Sigmoid colon (tissue), 7 donors: ENCODE measurements at regions of chr6 and their contacts with region 1.

Region 1: DNA sequence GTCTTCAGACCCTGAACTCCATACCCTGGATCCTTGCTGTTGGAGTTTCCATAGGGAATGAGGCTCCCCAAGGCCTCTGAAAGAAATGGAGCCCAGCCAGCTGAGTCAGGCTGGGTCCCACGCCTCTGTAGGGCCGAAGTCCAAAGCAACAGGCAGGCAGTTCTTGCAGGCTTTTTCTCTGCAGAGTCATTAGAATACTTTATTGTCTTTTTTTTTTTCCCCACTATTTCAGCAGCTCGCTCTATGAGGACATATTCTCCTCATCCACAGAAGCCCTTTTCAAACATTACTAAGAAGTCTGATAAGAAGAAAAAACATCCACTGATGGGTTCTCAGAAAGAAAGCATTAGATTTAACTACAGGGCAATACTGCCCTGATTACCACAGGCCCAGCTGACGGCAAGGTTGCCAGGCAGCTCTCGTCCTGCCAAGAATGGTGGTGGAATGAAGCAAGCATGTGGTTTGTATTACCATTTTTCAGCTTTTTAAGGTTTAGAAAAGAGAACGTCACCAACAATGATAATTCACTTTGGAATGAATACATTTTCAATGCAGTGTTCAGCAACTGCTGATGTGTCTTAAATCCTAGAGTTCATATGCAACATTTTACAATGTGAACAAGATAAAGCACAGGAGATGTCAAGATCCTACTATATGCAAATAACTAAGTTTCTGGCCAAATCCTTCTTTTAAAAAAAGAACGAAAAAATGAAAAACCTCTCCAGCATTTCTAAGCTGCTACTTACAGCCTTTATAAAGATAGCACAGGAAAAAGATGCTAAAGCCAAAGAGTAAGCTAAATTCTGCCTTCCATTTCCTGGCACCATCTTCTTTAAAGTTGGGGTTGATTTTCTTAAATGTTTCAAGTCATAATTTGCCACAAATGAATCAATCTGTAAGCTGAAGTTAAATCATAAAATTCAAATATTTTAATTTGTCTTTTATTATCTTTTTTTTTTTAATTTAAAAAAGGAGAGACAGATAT is 223.6 kb upstream of the CITED2 start:
- DNase-seq: peak; percentile 86
- H3K4me3 ChIP-seq: no peak overlapping the region
- H3K27ac ChIP-seq: peak overlapping the region; percentile 69 to 82 (median 77)
- H3K4me1 ChIP-seq: peaks cover 0 to 54% (median 46%) of the 10 kb centered on the region in 4 donors
- H3K27me3 ChIP-seq: no peaks in the 10 kb centered on the region
- CTCF ChIP-seq: no peak
- EP300 ChIP-seq: peak in 1 of 4 donors; percentile 11
- POLR2A ChIP-seq: no peak

Region 2: DNA sequence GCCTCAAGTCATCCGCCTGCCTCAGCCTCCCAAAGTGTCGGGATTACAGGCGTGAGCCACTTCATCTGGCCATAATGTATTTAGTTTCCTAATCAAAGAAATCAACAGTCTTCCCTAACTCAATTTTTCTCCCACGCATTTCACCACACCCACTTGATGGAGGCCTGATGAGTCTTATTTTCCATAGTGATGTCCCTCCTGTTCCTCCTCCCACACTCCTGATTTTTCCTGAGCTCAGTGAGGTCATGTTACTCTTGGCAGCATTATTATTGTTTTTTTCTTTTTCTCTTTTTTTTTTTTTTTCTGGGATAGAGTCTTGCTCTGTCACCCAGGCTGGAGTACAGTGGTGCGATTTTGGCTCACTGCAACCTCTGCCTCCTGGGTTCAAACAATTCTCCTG is 560.6 kb before region 1 on chr6:
- intact Hi-C with region 1: no loop called
- DNase-seq: no peak
- H3K4me3 ChIP-seq: no peak overlapping the region
- H3K27ac ChIP-seq: no peak overlapping the region
- H3K4me1 ChIP-seq: no peaks in the 10 kb centered on the region
- H3K27me3 ChIP-seq: no peaks in the 10 kb centered on the region
- CTCF ChIP-seq: no peak
- EP300 ChIP-seq: no peak
- POLR2A ChIP-seq: no peak

Region 3: DNA sequence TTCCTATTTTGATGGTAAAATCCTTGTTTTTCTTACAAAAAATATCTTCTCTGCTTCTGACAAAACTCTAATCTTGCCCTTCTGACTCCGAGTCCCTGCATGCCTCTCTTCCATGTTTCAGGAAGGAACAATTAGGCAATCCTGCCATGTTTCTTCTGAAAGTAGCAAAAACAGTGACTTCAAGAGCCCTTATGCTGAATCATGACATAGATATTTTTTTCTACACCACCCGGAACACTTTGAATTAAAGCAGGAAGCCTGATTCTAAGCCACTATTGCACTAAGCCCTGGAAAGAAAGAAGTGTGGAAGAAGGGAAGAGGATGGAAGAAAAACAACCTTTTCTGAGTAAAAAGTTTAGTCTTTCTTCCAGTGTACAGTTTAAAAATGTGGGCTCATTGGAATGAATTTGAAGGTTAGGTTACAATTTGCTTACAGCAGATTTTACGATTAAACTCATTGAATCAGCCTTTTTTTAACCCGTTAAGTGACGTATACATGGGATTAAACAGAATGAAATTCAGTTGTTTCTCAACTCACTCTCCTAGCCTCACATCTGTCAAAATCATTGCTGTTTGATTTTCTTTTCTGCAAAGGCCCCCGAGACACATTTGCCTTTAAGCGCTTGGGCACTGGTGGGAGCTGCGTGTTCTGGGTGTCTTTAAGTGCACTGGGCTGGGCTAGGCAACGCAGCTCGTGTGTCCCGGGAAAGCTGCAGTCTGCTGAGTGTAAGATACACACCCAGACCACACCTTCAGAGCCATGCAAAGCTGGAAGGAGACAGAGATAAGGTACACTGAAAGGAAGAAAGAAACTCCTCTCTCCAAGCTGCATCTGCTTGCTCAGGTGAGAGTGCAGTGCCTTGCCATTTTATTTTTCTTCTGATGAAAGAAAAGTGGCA is 64.2 kb before region 1 on chr6:
- intact Hi-C with region 1: no loop called
- DNase-seq: no peak
- H3K4me3 ChIP-seq: no peak overlapping the region
- H3K27ac ChIP-seq: peak overlapping the region; percentile 40 to 68 (median 52)
- H3K4me1 ChIP-seq: peaks cover 0 to 38% (median 30%) of the 10 kb centered on the region in 4 donors
- H3K27me3 ChIP-seq: no peaks in the 10 kb centered on the region
- CTCF ChIP-seq: no peak
- EP300 ChIP-seq: no peak
- POLR2A ChIP-seq: peak in 1 of 2 donors; percentile 15

Region 4: DNA sequence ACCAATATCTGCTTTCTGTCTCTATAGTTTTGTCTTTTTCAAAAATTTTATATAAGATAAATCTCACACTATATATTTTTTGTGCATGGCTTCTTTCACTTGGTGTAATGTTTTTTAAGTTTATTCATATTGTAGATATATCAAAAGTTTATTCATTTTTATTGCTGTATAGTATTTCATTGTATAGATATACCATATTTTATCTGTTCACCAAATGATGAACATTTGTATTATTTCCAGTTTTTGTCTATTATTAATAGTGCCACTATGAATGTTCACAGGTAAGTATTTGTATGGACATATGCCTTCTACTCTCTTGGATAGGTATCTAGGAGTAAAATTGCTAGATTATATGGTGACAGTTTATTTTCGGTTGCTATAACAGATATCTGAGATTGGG is 65.9 kb after region 1 on chr6:
- intact Hi-C with region 1: no loop called
- DNase-seq: no peak
- H3K4me3 ChIP-seq: no peak overlapping the region
- H3K27ac ChIP-seq: no peak overlapping the region
- H3K4me1 ChIP-seq: no peaks in the 10 kb centered on the region
- H3K27me3 ChIP-seq: no peaks in the 10 kb centered on the region
- CTCF ChIP-seq: no peak
- EP300 ChIP-seq: no peak
- POLR2A ChIP-seq: no peak

Region 5: DNA sequence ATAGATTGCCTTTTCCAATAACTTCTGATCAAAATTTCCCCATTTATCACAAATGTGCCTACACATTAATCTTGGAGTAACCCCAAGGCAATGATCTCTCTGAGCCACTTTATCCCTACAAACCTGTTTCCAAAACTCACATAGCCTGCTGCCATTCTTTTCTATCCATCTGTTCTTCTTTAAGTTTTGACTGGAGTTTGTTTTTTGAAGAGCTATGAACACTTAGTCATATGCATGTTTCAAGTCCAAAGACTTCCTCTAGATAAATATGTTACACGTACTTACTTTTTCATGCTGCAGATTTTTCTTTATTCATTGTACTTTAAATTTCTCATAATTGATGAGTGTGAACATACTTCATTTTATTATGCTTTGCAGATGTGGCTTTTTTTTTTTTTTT is 265.3 kb after region 1 on chr6:
- intact Hi-C with region 1: loop called (anchors 10 kb)
- DNase-seq: no peak
- H3K4me3 ChIP-seq: no peak overlapping the region
- H3K27ac ChIP-seq: no peak overlapping the region
- H3K4me1 ChIP-seq: peaks cover 0 to 25% (median 17%) of the 10 kb centered on the region in 4 donors
- H3K27me3 ChIP-seq: no peaks in the 10 kb centered on the region
- CTCF ChIP-seq: no peak
- EP300 ChIP-seq: no peak
- POLR2A ChIP-seq: no peak

Region 6: DNA sequence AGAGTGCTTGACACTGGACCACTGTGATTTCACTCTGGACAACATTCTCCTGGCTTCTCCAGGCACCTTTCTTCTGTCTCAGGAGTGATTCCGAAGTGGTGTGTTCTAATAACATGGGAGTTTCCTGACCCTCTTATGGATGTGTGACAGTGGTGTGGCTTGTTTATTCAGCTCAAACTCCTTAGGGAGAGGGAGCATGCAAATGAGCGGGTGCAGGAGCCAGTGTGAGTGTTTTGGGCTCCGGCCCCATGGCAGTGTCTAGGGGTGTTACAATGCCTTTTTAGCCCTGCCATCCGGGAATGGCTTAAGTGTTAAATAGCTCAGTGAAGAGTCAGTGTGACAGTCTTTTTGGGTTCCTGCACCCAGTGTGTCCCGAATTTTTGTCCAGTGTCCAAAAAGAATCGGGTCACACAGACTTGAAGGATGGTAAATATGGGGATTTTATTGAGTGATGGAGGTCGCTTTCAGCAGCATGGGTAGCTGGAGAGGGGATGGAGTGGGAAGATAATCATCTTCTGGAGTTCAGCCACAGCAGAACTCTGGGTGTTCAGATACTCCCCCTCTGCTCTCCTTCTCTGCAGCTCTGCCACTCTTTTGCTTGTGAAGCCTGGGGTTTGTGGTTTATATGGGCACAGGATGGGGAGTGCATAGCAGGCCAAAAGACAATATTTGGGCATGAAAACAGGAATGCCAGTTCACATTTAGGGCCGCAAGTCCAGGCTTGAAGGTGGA is 705.3 kb after region 1 on chr6:
- intact Hi-C with region 1: no loop called
- DNase-seq: no peak
- H3K4me3 ChIP-seq: no peak overlapping the region
- H3K27ac ChIP-seq: no peak overlapping the region
- H3K4me1 ChIP-seq: no peaks in the 10 kb centered on the region
- H3K27me3 ChIP-seq: no peaks in the 10 kb centered on the region
- CTCF ChIP-seq: no peak
- EP300 ChIP-seq: no peak
- POLR2A ChIP-seq: no peak